ENCODE measurements at regions of chr12 and their contacts with region 1.

Region 1: DNA sequence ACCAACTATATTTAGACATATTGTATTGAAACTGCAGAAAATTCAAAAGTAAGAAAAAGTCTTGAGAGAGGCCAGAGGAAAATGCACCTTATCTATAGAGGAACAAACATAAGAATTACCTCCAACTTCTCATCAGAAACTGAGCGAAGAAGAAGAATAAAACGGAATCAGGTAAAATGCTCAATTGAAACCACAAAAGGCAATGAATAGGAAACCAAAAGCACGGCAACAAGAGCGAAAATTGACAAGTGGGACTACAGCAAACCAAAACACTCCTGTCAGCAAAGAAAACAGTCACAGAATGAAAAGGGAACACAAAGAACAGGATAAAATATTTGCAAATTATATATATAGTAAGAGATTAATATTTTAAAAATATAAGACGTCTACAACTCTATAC is 61.9 kb upstream of the PARP11 start:
- DNase-seq: peak; percentile 6
- H3K4me3 Mint-ChIP-seq: peak overlapping the region; percentile 59
- H3K27ac Mint-ChIP-seq: peak overlapping the region; percentile 3
- H3K4me1 Mint-ChIP-seq: peaks cover 43% of the 10 kb centered on the region
- H3K27me3 Mint-ChIP-seq: peaks cover 5% of the 10 kb centered on the region

Region 2: DNA sequence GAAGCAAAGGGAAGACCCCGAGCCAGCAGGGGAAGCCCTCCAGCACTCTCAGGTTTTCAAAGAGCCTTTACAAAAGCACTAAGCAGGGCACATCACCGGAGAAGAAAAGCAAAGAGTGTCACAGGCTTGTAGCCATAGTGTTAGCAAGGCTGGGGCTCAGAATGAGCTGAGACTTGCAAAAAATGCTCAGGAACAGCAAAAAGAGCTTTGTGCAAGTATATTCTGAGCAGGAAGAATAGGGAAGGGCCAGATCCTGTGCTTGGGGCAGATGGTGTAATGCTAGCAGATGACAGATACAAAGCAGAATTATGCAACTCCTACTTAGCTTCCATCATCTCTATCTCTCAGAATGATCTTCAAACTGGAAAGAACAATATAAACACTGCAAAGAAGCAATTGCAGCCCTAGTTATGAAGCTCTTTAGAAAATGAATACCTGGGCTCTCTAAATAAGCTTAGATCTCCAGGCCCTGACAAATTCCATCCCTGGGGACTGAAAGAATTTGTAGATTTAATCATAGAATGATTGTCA is 38.2 kb before region 1 on chr12:
- intact Hi-C with region 1: loop called (anchors 5 kb)
- DNase-seq: no peak
- H3K4me3 Mint-ChIP-seq: peak overlapping the region; percentile 72
- H3K27ac Mint-ChIP-seq: peak overlapping the region; percentile 75
- H3K4me1 Mint-ChIP-seq: peaks cover 30% of the 10 kb centered on the region
- H3K27me3 Mint-ChIP-seq: no peaks in the 10 kb centered on the region

Region 3: GRCh38 chr12:3973978-3974644 is 39.0 kb after region 1 on chr12:
- intact Hi-C with region 1: loop called (anchors 2 kb)
- DNase-seq: no peak
- H3K4me3 Mint-ChIP-seq: peak overlapping the region; percentile 49
- H3K27ac Mint-ChIP-seq: peak overlapping the region; percentile 56
- H3K4me1 Mint-ChIP-seq: peaks cover 56% of the 10 kb centered on the region
- H3K27me3 Mint-ChIP-seq: no peaks in the 10 kb centered on the region

Measured in activated T-helper 1 cell treated with anti-CD3 and anti-CD28 coated beads, Interleukin-12 subunit alpha, Interleukin-12 subunit beta, Interleukin-2, Interleukin-4 antibody, amounts not matched to agents 30 ng/mL and 10 ng/mL and 1 ng/mL, durations not matched to agents 14 hours and 24 hours and 36 hours (primary cell).